ENCODE measurements at regions of chr14 and their contacts with region 1.

Region 1: DNA sequence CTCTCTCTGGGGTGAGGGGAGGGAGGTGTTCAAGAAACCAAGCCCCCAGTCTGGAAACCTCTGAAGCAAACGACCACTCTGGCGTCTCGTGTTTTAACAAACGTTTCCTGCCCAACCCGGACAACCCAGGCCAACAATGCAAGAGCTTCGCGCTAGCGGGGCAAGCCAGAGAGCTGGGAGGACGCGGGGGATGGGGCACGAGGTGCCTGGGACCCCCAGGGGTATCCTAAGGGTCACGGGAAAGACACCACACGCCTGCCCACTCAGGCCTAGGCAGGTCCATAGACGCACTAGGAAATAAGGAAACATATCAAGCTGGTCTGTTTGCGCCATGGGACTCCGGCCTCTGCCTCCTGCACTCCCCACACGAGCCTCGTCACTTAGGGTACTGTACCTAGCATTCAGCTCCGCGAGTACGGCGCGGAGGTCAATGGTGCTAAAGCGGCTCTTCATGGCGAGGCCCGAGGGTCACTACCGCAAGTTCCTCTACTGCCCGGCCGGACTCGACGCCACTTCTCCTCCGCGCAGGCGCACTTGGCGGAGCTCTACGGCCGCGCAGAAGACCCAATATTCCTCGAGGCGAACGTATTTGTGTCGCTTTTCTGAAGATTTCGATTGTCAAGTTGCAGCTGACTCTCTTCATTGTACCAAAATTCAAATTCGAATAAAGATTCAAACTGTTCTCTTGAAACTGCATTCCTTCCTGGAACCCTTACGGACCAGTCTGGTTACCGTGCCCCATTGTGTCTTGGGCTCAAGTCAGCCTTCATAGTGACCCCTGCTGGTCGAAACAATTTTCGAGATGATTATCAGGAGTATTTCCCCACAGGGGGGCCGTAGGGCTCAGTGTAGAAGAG is at the start of gene NEMF:
- DNase-seq: no peak
- H3K4me3 ChIP-seq: peak within 1 kb of the TSS; percentile 96
- CTCF ChIP-seq: peak; percentile 72

Region 2: GRCh38 chr14:49505041-49505766 is 347.3 kb before region 1 on chr14:
- CTCF ChIA-PET with region 1: no interaction called
- POLR2A ChIA-PET with region 1: no interaction called
- DNase-seq: no peak
- H3K4me3 ChIP-seq: no peak overlapping the region
- CTCF ChIP-seq: no peak

Region 3: GRCh38 chr14:49633640-49634546 is 218.6 kb before region 1 on chr14:
- CTCF ChIA-PET with region 1: interaction called, 10 read pairs
- POLR2A ChIA-PET with region 1: interaction called, 6 read pairs
- DNase-seq: peak; percentile 56
- H3K4me3 ChIP-seq: peak overlapping the region; percentile 81
- CTCF ChIP-seq: peak; percentile 93

Region 4: GRCh38 chr14:49820176-49820575 is 32.4 kb before region 1 on chr14:
- CTCF ChIA-PET with region 1: interaction called, 10 read pairs
- POLR2A ChIA-PET with region 1: no interaction called
- DNase-seq: no peak
- H3K4me3 ChIP-seq: no peak overlapping the region
- CTCF ChIP-seq: no peak

Region 5: DNA sequence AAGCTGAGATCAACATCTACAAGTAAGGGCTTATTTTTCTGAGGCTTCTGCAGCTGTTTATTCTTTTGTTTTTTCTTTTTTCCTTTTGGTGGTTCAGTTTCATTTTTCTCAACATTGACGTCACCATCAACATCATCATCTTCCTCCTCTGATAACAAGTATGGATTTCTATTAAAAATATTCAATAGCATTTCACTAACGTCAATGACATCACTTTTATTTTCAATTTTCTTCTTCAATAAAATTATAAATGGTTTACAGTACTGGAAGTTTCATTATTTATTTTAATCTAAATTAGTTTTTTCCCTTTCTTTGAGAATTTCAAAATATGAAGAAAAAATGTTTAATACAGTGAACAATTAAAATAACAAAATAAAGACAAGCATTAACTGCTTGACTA is 23.9 kb before region 1 on chr14:
- CTCF ChIA-PET with region 1: interaction called, 16 read pairs
- POLR2A ChIA-PET with region 1: no interaction called
- DNase-seq: no peak
- H3K4me3 ChIP-seq: no peak overlapping the region
- CTCF ChIP-seq: no peak

Region 6: DNA sequence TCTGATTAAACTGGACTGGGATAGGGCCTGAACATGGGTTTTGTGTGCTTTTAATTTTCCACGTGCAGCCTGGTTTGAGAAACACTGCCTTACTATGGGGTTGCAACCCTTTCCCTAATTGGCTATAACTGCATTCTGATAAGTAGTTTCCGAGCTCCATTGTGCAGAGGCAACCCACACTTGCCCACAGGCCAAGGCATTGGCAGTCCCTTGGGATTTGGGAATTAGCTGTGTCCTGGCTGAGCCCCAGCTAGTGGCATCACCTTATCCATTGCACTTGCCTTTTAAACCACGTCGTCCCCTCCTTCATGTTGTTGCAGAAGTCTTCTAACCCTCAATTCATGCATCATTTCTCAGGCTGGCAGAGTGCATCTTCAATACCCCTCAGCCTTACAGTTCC is 253.6 kb after region 1 on chr14:
- CTCF ChIA-PET with region 1: interaction called, 368 read pairs
- POLR2A ChIA-PET with region 1: interaction called, 3 read pairs
- DNase-seq: no peak
- H3K4me3 ChIP-seq: no peak overlapping the region
- CTCF ChIP-seq: no peak

Region 7: DNA sequence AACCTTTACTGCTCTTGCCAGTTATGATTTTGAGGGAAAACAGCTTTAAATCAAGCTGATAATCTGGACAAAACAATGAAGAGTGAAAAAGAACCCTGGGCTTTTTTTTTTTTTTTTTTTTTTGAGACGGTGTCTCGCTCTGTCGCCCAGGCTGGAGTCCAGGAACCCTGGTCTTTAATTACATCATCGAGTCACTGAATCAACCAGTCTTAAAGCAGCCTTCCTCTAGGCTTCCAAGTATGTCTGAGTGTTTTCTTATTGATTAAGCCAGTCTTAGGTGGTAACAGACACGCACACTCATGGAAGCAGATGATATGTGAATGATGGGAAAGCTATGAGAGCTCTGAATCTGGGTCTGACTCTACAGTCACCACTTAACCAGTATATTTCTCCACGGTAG is 269.8 kb after region 1 on chr14:
- CTCF ChIA-PET with region 1: interaction called, 11 read pairs
- POLR2A ChIA-PET with region 1: no interaction called
- DNase-seq: no peak
- H3K4me3 ChIP-seq: no peak overlapping the region
- CTCF ChIP-seq: no peak